Heart left ventricle (tissue), 16 donors: ENCODE measurements at regions of chr2 and their contacts with region 1.

Region 1: GRCh38 chr2:13006829-13007717 is 290.3 kb downstream of the TRIB2 start:
- DNase-seq: peak in 4 of 5 donors; percentile 46 to 66 (median 64)
- ATAC-seq: peak; percentile 85 to 92 (median 90)
- H3K4me3 ChIP-seq: peak overlapping the region in 10 of 12 donors; percentile 8 to 54 (median 31)
- H3K27ac ChIP-seq: peak overlapping the region in 11 of 12 donors; percentile 1 to 60 (median 46)
- H3K4me1 ChIP-seq: peaks cover 0 to 42% (median 17%) of the 10 kb centered on the region in 12 donors
- H3K27me3 ChIP-seq: no peaks in the 10 kb centered on the region
- CTCF ChIP-seq: peak; percentile 82 to 93 (median 90)
- POLR2A ChIP-seq: no peak

Region 2: GRCh38 chr2:11688222-11689069 is 1318.6 kb before region 1 on chr2:
- intact Hi-C with region 1: loop called in 1 of 10 experiments (anchors 10 kb)
- DNase-seq: peak; percentile 83 to 91 (median 86)
- ATAC-seq: peak; percentile 81 to 90 (median 88)
- H3K4me3 ChIP-seq: peak overlapping the region in 10 of 12 donors; percentile 3 to 41 (median 30)
- H3K27ac ChIP-seq: peak overlapping the region in 9 of 12 donors; percentile 2 to 77 (median 59)
- H3K4me1 ChIP-seq: peaks cover 0 to 36% (median 14%) of the 10 kb centered on the region in 12 donors
- H3K27me3 ChIP-seq: peaks cover 0 to 6% (median 0%) of the 10 kb centered on the region in 9 donors
- CTCF ChIP-seq: peak; percentile 78 to 97 (median 87)
- POLR2A ChIP-seq: no peak

Region 3: GRCh38 chr2:11863513-11864328 is 1143.4 kb before region 1 on chr2:
- intact Hi-C with region 1: loop called in 8 of 10 experiments (anchors 2 to 10 kb)
- DNase-seq: peak; percentile 85 to 91 (median 87)
- ATAC-seq: peak; percentile 83 to 96 (median 94)
- H3K4me3 ChIP-seq: peak overlapping the region in 6 of 12 donors; percentile 3 to 24 (median 15)
- H3K27ac ChIP-seq: peak overlapping the region in 11 of 12 donors; percentile 45 to 67 (median 53)
- H3K4me1 ChIP-seq: peaks cover 0 to 28% (median 12%) of the 10 kb centered on the region in 12 donors
- H3K27me3 ChIP-seq: no peaks in the 10 kb centered on the region
- CTCF ChIP-seq: peak; percentile 90 to 99 (median 96)
- POLR2A ChIP-seq: no peak

Region 4: GRCh38 chr2:12169721-12170120 is 837.4 kb before region 1 on chr2:
- intact Hi-C with region 1: loop called in 1 of 10 experiments (anchors 5 kb)
- DNase-seq: peak in 4 of 5 donors; percentile 63 to 69 (median 66)
- ATAC-seq: peak; percentile 37 to 92 (median 76)
- H3K4me3 ChIP-seq: no peak overlapping the region
- H3K27ac ChIP-seq: peak overlapping the region in 11 of 12 donors; percentile 48 to 87 (median 66)
- H3K4me1 ChIP-seq: peaks cover 14 to 33% (median 26%) of the 10 kb centered on the region in 12 donors
- H3K27me3 ChIP-seq: no peaks in the 10 kb centered on the region
- CTCF ChIP-seq: no peak
- POLR2A ChIP-seq: no peak

Region 5: DNA sequence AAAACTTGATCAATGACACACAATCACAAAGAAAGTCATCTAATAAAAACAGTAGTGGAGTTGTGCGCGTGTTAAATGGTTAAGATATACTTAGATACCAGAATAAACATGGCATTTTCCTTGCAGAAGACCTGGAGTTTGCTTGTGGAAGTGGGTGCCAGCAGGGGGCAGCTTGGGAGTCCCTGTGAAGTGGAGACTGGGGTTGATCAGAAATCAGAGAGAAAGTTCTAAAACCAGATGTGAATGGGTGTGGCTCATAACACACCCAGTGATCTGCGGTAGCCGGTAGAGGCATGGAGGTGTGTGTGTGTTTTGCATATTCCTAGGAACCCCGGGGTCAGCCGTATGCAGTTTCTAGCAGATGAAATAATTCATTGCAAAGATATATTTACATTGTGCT is 590.5 kb before region 1 on chr2:
- intact Hi-C with region 1: loop called in 3 of 10 experiments (anchors 5 kb)
- DNase-seq: peak in 4 of 5 donors; percentile 33 to 68 (median 54)
- ATAC-seq: peak in 2 of 4 donors; percentile 20 to 58
- H3K4me3 ChIP-seq: no peak overlapping the region
- H3K27ac ChIP-seq: no peak overlapping the region
- H3K4me1 ChIP-seq: peaks cover 0 to 19% (median 0%) of the 10 kb centered on the region in 12 donors
- H3K27me3 ChIP-seq: no peaks in the 10 kb centered on the region
- CTCF ChIP-seq: peak; percentile 37 to 68 (median 54)
- POLR2A ChIP-seq: no peak

Region 6: GRCh38 chr2:12807907-12808810 is 198.9 kb before region 1 on chr2:
- intact Hi-C with region 1: loop called in 5 of 10 experiments (anchors 10 kb)
- DNase-seq: peak in 2 of 5 donors; percentile 41 to 48
- ATAC-seq: peak; percentile 74 to 90 (median 84)
- H3K4me3 ChIP-seq: no peak overlapping the region
- H3K27ac ChIP-seq: peak overlapping the region; percentile 42 to 87 (median 72)
- H3K4me1 ChIP-seq: peaks cover 9 to 58% (median 44%) of the 10 kb centered on the region in 12 donors
- H3K27me3 ChIP-seq: no peaks in the 10 kb centered on the region
- CTCF ChIP-seq: no peak
- POLR2A ChIP-seq: peak in 1 of 2 donors; percentile 17

Region 7: GRCh38 chr2:12824351-12824777 is 182.7 kb before region 1 on chr2:
- intact Hi-C with region 1: loop called in 5 of 10 experiments (anchors 10 kb)
- DNase-seq: peak in 4 of 5 donors; percentile 58 to 79 (median 70)
- ATAC-seq: peak; percentile 48 to 81 (median 67)
- H3K4me3 ChIP-seq: peak overlapping the region in 1 of 12 donors; percentile 10
- H3K27ac ChIP-seq: peak overlapping the region; percentile 79 to 95 (median 86)
- H3K4me1 ChIP-seq: peaks cover 9 to 49% (median 36%) of the 10 kb centered on the region in 12 donors
- H3K27me3 ChIP-seq: no peaks in the 10 kb centered on the region
- CTCF ChIP-seq: no peak
- POLR2A ChIP-seq: no peak

Region 8: GRCh38 chr2:13046557-13047165 is 39.6 kb after region 1 on chr2:
- intact Hi-C with region 1: no loop called
- DNase-seq: no peak
- ATAC-seq: no peak
- H3K4me3 ChIP-seq: no peak overlapping the region
- H3K27ac ChIP-seq: no peak overlapping the region
- H3K4me1 ChIP-seq: no peaks in the 10 kb centered on the region
- H3K27me3 ChIP-seq: peaks cover 0 to 4% (median 0%) of the 10 kb centered on the region in 9 donors
- CTCF ChIP-seq: peak in 11 of 12 donors; percentile 14 to 55 (median 33)
- POLR2A ChIP-seq: no peak

Region 9: GRCh38 chr2:13260402-13260801 is 253.3 kb after region 1 on chr2:
- intact Hi-C with region 1: no loop called
- DNase-seq: no peak
- ATAC-seq: no peak
- H3K4me3 ChIP-seq: no peak overlapping the region
- H3K27ac ChIP-seq: no peak overlapping the region
- H3K4me1 ChIP-seq: no peaks in the 10 kb centered on the region
- H3K27me3 ChIP-seq: no peaks in the 10 kb centered on the region
- CTCF ChIP-seq: no peak
- POLR2A ChIP-seq: no peak